ENCODE measurements at regions of chr17 and their contacts with region 1.

Region 1: DNA sequence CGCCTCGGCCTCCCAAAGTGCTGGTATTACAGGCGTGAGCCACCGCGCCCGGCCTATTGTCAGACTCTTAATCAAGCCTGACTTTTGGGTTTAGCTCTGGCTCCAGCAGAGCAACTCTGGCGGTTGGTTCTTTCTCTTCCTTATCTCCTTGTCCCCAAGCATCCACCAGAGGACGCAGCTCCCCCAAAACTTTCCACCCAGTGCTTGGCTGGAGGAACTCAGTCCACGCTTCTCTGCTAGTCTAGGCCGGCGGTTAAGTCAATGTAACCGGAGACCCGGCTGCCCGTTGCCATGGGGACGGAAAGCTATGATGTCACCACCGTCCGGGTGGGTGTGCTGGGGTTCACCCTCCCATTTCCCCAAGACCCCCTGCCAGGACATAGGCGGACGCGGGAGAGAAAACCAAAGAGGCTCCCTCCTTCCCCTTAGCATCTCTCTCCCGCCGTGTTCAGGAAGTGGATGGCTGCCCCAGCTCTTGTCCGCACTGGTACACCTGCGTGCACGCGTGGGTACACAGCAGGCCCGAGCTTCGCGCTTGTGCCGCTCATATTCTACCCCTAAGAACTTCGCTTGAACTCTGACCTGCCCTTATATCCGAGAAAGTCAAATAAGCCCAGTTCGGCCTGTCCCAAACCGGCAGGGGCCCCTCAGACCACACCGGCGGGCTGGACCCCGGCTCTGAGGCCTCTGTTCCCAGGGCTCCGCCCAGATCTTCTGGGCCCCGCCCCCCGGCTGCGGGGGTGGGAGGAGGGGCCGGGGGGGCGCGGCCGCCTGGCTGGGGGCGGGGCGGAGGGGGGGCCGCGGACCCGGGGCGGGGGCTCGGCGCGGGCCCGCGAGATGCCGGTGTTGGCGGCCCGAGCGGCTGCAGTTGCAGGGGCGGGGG is at the start of gene RND2:
- DNase-seq: peak; percentile 85 to 91 (median 90)
- ATAC-seq: peak; percentile 75
- H3K4me3 ChIP-seq: peak within 1 kb of the TSS; percentile 10 to 14
- H3K27ac ChIP-seq: peak within 1 kb of the TSS; percentile 33 to 75 (median 60)
- H3K4me1 ChIP-seq: peaks cover 28% of the 10 kb centered on the region
- H3K27me3 ChIP-seq: no peaks in the 10 kb centered on the region
- CTCF ChIP-seq: peak; percentile 33 to 82 (median 70)
- POLR2A ChIP-seq: peak in 2 of 3 donors; percentile 52 to 70
- total RNA-seq, gene RND2: 0.33 to 0.52 TPM

Region 2: GRCh38 chr17:43134774-43135453 is 110.3 kb after region 1 on chr17:
- intact Hi-C with region 1: loop called (anchors 10 kb)
- DNase-seq: no peak
- ATAC-seq: no peak
- H3K4me3 ChIP-seq: no peak overlapping the region
- H3K27ac ChIP-seq: no peak overlapping the region
- H3K4me1 ChIP-seq: peaks cover 4% of the 10 kb centered on the region
- H3K27me3 ChIP-seq: no peaks in the 10 kb centered on the region
- CTCF ChIP-seq: no peak
- POLR2A ChIP-seq: no peak

Region 3: DNA sequence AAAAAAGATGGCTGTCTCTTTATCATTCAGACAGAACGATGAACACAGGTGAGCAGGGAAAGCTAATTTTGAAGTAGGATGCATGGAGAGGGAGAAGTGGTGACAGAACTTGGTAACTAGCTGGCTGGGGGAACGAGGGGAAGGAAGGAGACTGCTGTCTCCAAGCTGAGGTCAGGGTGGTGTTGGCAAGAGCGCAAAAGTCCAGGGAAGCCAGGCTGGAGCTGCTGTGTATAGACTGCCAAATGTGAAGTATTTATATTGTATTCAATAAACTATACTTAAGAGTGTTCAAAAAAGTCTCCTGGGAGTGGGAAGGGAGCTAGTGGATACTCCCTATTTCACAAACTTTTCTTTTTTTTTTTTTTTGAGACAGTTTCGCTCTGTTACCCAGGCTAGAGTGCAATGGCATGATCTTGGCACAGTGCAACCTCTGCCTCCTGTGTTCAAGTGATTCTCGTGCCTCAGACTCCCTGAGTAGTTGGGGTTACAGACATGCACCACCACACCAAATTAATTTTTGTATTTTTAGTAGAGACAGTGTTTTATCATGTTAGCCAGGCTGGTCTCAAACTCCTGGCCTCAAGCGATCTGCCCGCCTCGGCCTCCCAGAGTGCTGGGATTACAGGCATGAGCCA is 195.2 kb after region 1 on chr17:
- intact Hi-C with region 1: no loop called
- DNase-seq: no peak
- ATAC-seq: no peak
- H3K4me3 ChIP-seq: no peak overlapping the region
- H3K27ac ChIP-seq: no peak overlapping the region
- H3K4me1 ChIP-seq: peaks cover 21% of the 10 kb centered on the region
- H3K27me3 ChIP-seq: no peaks in the 10 kb centered on the region
- CTCF ChIP-seq: no peak
- POLR2A ChIP-seq: no peak

Region 4: DNA sequence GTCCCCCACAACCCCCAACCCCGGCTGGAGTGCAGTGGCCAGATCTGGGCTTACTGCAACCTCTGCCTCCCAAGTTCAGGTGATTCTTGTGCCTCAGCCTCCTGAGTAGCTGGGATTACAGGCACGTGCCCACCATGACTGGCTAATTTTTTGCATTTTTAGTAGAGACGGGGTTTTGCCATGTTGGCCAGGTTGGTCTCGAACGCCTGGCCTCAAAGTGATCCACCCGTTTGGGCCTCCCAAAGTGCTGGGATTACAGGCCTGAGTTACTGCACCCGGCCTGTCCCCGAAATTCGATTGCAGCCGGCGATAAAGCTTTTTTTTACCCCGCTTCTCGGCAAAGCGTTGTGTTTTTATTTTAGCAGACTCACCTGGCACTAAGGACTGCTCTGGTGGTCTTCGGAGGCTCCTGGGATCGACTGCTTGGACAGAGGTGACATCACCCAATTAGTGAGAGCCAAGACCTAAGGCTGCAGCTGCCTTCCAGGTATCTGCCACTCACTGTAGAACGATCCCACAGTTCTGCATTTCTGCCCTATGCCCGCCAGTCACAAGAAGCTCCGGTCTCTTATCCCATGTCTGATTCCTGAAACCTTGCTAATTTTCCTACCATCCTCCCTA is 292.0 kb after region 1 on chr17:
- intact Hi-C with region 1: loop called (anchors 10 kb)
- DNase-seq: peak; percentile 43 to 67 (median 58)
- ATAC-seq: peak; percentile 43
- H3K4me3 ChIP-seq: no peak overlapping the region
- H3K27ac ChIP-seq: no peak overlapping the region
- H3K4me1 ChIP-seq: no peaks in the 10 kb centered on the region
- H3K27me3 ChIP-seq: no peaks in the 10 kb centered on the region
- CTCF ChIP-seq: no peak
- POLR2A ChIP-seq: no peak